BJ (cell line): ENCODE measurements at regions of chr13 and their contacts with region 1.

Region 1: DNA sequence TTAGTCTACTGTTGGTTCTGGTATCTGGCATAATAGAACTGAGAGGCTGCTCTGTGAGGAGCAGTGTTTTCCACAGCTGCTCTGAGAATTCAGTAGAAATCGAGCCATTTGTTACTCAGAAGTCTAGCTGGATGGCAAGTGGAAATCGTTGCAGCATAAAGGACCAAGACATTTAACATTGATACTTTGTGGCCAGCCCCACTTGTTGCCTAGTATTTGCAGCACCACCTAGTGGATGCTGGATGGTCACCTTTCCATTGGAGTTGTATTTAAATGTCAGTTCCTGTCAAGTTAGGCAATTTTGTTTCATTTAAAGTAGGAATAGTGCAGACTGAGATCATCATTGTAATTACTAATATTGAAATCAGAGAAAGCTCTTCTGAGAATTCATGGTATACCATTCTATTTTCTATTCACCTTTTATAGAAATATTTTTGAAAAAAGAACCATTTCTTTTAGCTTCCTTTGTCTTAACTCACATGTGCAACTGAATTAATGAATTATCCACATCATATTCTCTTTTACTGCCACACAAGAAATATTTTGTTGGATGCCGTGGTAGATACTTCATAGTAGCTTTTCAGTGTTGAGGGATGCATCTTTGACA is 64.6 kb downstream of the PDS5B start:
- DNase-seq: no peak
- H3K4me3 ChIP-seq: no peak overlapping the region
- H3K27me3 ChIP-seq: no peaks in the 10 kb centered on the region
- CTCF ChIP-seq: peak; percentile 70

Region 2: DNA sequence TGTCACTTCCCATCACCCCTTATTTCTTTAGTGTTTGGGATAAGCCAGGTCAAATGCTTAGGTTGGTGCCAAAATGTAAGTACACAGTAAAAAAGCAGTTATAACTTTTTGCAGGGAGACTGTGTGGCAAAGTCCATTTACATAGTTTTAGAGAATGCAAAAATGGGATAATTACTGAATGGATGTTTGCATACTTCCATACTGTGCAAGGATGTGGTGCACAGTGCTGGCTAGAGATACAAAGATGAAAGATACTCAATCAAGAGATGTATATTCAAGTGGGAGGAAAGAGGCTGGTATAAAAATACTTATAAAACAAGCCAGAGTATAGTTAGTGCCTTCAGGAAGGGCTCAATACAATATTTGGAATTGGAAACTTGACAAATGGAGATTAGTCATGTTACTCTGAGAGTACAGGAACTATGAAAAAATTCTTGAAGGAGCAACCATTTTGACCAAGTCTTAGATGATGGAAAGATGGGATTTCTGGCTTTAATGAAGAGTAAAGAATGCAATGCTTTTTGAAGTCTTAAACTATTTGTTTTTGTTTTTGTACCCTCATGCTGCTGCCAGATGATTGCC is 56.6 kb before region 1 on chr13:
- CTCF ChIA-PET with region 1: interaction called, 13 read pairs
- POLR2A ChIA-PET with region 1: no interaction called
- DNase-seq: no peak
- H3K4me3 ChIP-seq: no peak overlapping the region
- H3K27me3 ChIP-seq: no peaks in the 10 kb centered on the region
- CTCF ChIP-seq: no peak

Region 3: GRCh38 chr13:32639502-32640105 is 11.2 kb before region 1 on chr13:
- CTCF ChIA-PET with region 1: interaction called, 20 read pairs
- POLR2A ChIA-PET with region 1: no interaction called
- DNase-seq: no peak
- H3K4me3 ChIP-seq: no peak overlapping the region
- H3K27me3 ChIP-seq: no peaks in the 10 kb centered on the region
- CTCF ChIP-seq: peak; percentile 84

Region 4: DNA sequence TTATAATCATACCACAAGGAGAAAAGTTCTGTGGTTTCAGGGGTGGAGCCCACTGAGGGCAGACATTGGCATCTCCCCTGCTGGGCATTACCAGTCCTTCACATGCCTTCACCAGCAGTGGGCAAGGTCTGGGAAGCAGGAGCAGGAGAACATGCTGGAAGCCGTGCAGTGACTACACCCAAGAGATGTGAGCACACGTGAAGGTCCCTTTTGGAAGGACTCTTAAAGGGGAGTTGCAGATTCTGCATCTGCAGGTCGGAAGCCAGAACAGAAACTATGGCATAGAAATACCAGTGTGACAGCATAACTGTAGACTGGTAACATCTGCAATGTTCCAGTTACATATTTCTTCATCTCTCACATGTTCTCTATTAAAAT is 338.5 kb after region 1 on chr13:
- CTCF ChIA-PET with region 1: no interaction called
- POLR2A ChIA-PET with region 1: no interaction called
- DNase-seq: no peak
- H3K4me3 ChIP-seq: no peak overlapping the region
- H3K27me3 ChIP-seq: peaks cover 5% of the 10 kb centered on the region; the same call in 1 of the 2 replicates
- CTCF ChIP-seq: no peak

Region 5: DNA sequence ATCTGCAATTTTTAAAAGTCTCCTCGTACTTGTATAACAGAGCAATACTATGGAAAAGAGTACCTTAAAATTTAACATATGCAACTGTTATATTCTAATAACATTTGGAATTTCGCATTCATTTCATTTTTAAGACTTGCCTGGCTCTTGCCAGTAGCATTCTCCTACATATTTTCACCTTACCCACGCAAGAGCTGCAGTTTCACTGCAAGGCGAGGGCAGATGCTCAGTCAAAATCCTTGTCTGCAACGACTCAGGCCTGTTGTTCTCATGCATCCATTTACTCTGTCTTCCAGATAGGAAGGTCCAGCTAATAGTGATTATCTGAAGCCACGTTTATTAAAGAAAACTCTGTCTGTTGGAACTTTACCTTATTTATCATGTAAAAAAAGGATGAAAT is 940.1 kb after region 1 on chr13:
- CTCF ChIA-PET with region 1: no interaction called
- POLR2A ChIA-PET with region 1: no interaction called
- DNase-seq: no peak
- H3K4me3 ChIP-seq: no peak overlapping the region
- H3K27me3 ChIP-seq: no peaks in the 10 kb centered on the region; the same call in 1 of the 2 replicates
- CTCF ChIP-seq: no peak